ENCODE measurements at regions of chr2 and their contacts with region 1.

Region 1: GRCh38 chr2:224520064-224520463 is 65.1 kb downstream of the CUL3 start:
- DNase-seq: peak; percentile 16
- H3K4me3 Mint-ChIP-seq: no peak overlapping the region
- H3K27ac Mint-ChIP-seq: peak overlapping the region; percentile 68
- H3K4me1 Mint-ChIP-seq: peaks cover 48% of the 10 kb centered on the region
- H3K27me3 Mint-ChIP-seq: no peaks in the 10 kb centered on the region

Region 2: GRCh38 chr2:224538561-224539154 is 18.6 kb after region 1 on chr2:
- intact Hi-C with region 1: loop called (anchors 2 kb)
- DNase-seq: no peak
- H3K4me3 Mint-ChIP-seq: no peak overlapping the region
- H3K27ac Mint-ChIP-seq: peak overlapping the region; percentile 21
- H3K4me1 Mint-ChIP-seq: peaks cover 16% of the 10 kb centered on the region
- H3K27me3 Mint-ChIP-seq: no peaks in the 10 kb centered on the region

Region 3: GRCh38 chr2:224561234-224562005 is 41.4 kb after region 1 on chr2:
- intact Hi-C with region 1: loop called (anchors 5 kb)
- DNase-seq: no peak
- H3K4me3 Mint-ChIP-seq: no peak overlapping the region
- H3K27ac Mint-ChIP-seq: no peak overlapping the region
- H3K4me1 Mint-ChIP-seq: peaks cover 18% of the 10 kb centered on the region
- H3K27me3 Mint-ChIP-seq: no peaks in the 10 kb centered on the region